Activated CD8-positive, alpha-beta memory T cell treated with anti-CD3 and anti-CD28 coated beads, Interleukin-2, amount 10 ng/mL, durations not matched to agents 7 days and 5 days (primary cell): ENCODE measurements at regions of chr20 and their contacts with region 1.

Region 1: GRCh38 chr20:45293041-45294002 is 13.3 kb upstream of the RBPJL start:
- DNase-seq: peak; percentile 88
- ATAC-seq: peak; percentile 94
- H3K4me3 Mint-ChIP-seq: peak overlapping the region; percentile 65
- H3K27ac Mint-ChIP-seq: no peak overlapping the region
- H3K4me1 Mint-ChIP-seq: peaks cover 5% of the 10 kb centered on the region
- H3K27me3 Mint-ChIP-seq: peaks cover 49% of the 10 kb centered on the region

Region 2: DNA sequence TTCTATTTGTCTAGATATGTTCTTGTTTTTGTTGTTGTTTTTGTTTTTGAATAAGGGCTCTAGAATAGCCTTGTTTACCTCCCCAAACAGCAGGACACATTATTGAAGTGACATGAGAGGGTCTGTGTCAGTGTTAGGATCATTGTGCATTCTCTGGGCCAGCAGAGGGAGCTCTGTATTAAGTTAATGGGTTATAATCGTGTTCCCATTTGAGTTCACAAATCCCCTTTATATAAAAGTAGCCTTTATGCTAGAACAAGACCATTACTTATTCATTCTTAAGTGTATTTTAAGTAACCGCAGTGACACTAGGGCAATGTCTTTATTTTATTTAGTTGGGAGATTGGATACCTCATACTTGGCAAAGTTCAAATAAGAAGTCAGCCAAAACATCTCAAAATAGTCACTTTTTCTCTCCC is 282.2 kb before region 1 on chr20:
- CTCF ChIA-PET with region 1: interaction called, 15 read pairs
- DNase-seq: peak; percentile 61
- ATAC-seq: peak; percentile 72
- H3K4me3 Mint-ChIP-seq: no peak overlapping the region
- H3K27ac Mint-ChIP-seq: peak overlapping the region; percentile 25
- H3K4me1 Mint-ChIP-seq: peaks cover 31% of the 10 kb centered on the region
- H3K27me3 Mint-ChIP-seq: no peaks in the 10 kb centered on the region

Region 3: DNA sequence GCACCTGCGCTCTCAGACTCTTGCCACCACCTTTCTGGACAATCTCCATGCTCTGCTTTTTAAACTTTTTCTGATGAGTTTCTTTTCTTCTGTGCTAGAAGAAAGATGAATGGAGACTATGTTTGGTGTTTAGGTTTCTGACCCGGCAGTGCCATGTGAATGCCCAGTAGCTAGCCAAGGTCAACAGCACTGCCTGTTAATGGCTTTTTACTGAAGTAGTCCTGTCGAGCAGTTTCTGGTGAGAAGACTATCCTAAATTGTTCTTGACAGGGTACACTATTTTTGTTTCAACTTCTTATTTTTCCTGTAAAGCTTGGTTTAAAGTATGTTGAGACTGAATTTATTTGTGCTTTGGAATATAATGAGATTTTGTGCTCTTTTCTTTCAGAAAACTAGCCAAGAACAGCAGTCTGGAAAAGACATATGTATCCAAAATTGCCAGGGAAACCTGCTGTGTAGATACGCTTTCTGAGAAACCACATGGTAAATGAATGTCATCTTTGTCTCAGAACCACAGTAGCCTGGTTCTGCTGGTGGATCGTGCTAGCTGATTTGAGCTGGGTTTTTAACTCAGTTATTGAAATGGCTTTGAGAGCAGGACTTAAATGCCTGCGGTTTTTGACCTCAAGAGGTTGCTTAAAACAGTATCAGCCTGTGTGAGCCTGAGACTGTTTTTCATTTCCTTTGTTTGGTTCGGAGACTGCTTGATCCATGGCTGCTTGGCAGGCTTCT is 240.5 kb before region 1 on chr20:
- CTCF ChIA-PET with region 1: interaction called, 12 read pairs
- DNase-seq: peak; percentile 75
- ATAC-seq: peak; percentile 85
- H3K4me3 Mint-ChIP-seq: peak overlapping the region; percentile 17
- H3K27ac Mint-ChIP-seq: peak overlapping the region; percentile 75
- H3K4me1 Mint-ChIP-seq: peaks cover 73% of the 10 kb centered on the region
- H3K27me3 Mint-ChIP-seq: no peaks in the 10 kb centered on the region

Region 4: GRCh38 chr20:45111799-45112471 is 181.4 kb before region 1 on chr20:
- CTCF ChIA-PET with region 1: interaction called, 39 read pairs
- DNase-seq: no peak
- ATAC-seq: no peak
- H3K4me3 Mint-ChIP-seq: no peak overlapping the region
- H3K27ac Mint-ChIP-seq: no peak overlapping the region
- H3K4me1 Mint-ChIP-seq: peaks cover 3% of the 10 kb centered on the region
- H3K27me3 Mint-ChIP-seq: peaks cover 3% of the 10 kb centered on the region

Region 5: DNA sequence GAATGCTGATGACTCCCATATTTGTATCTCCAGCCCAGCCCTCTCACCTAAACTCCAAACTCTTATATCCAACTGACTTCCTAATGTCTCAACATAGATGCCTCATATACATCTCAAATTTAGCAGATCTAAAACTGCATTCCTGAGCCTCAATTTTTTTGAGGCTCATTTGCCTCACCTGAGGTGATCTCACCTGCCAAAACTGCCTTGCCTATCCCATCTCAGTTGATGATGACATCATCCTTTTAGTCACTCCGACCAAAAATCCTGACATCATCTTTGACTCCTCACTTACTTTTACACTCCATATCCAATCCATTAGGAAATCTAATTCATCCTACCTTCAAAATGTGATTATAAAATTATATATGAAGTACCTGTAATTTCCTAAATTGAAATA is 13.3 kb before region 1 on chr20:
- CTCF ChIA-PET with region 1: interaction called, 12 read pairs
- DNase-seq: no peak
- ATAC-seq: no peak
- H3K4me3 Mint-ChIP-seq: no peak overlapping the region
- H3K27ac Mint-ChIP-seq: no peak overlapping the region
- H3K4me1 Mint-ChIP-seq: peaks cover 2% of the 10 kb centered on the region
- H3K27me3 Mint-ChIP-seq: peaks cover 47% of the 10 kb centered on the region

Region 6: DNA sequence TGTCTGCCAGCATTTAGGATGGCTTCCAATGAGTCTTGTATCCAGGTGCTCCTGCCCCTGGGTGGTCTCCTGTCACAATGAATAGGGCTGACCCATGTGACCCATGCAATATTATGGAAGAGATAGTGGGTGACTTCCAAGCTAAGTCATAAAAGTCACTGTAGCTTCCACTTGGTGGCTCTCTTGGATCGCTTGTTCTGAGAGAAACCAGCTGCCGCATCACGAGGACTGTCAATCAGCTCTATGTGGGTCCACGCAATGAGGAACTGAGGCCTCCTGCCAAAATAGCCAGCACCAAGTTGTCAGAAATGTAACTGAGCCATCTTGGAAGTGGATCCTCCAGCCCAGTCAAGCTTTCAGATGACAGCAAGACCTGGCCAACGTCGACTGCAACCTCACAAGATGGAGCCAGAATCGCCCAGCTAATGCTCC is 29.6 kb after region 1 on chr20:
- CTCF ChIA-PET with region 1: interaction called, 73 read pairs
- DNase-seq: no peak
- ATAC-seq: no peak
- H3K4me3 Mint-ChIP-seq: no peak overlapping the region
- H3K27ac Mint-ChIP-seq: no peak overlapping the region
- H3K4me1 Mint-ChIP-seq: peaks cover 35% of the 10 kb centered on the region
- H3K27me3 Mint-ChIP-seq: no peaks in the 10 kb centered on the region

Region 7: GRCh38 chr20:45450097-45450818 is 156.9 kb after region 1 on chr20:
- CTCF ChIA-PET with region 1: interaction called, 17 read pairs
- DNase-seq: no peak
- ATAC-seq: peak; percentile 34
- H3K4me3 Mint-ChIP-seq: no peak overlapping the region
- H3K27ac Mint-ChIP-seq: no peak overlapping the region
- H3K4me1 Mint-ChIP-seq: peaks cover 15% of the 10 kb centered on the region
- H3K27me3 Mint-ChIP-seq: peaks cover 8% of the 10 kb centered on the region

Region 8: DNA sequence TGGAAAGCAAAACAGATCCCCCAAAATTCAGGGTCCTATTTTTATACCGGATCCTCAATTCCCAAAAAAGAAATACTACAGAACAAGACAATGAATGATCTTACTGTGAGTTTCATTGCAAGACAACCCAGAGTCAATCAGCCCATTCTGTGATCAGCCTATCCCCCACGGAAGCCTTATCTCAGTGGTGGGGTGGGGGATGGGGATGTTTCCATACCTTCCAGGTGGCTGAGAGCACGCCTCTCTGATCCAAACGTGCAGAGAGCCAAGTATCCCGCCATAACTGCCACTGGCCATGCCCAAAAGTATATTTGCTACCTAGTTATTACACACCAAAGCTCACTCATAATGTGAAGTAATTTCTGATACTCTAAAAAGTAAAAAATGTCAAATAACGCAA is 191.4 kb after region 1 on chr20:
- CTCF ChIA-PET with region 1: no interaction called
- DNase-seq: no peak
- ATAC-seq: no peak
- H3K4me3 Mint-ChIP-seq: no peak overlapping the region
- H3K27ac Mint-ChIP-seq: no peak overlapping the region
- H3K4me1 Mint-ChIP-seq: no peaks in the 10 kb centered on the region
- H3K27me3 Mint-ChIP-seq: peaks cover 54% of the 10 kb centered on the region